Kidney (tissue), 22 donors: ENCODE measurements at regions of chr12 and their contacts with region 1.

Region 1: DNA sequence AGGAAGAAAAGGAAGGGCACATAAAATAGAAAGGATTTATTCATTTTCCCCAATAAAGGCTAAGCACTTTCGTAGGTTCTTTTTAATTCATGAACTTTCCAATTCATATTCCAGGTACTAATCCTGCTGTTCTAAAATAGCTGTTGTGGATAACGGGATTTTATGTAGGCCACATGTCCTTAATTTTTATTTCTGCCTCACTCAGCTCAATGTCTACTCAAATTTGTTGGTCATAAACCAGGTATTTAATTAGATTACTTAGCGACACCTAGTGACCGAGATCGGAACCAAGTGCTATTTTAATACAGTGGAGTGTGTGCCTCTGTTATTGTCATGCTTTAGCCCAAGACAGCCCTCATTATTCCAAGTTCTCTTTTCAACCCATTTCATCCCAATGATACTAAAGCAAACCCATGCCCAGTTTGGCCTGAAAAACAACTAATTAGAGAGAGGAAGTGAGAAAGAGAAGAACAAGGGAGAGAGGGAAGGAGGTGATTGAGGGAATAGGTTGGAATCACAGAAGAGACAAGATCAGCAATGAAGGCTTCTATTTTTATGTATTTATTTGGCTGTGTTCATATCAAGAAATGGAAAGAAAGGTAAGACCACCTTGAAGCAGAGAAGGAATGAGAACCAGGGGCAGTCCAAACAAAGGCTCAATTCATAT is 45.9 kb upstream of the IFNG-AS1 start:
- DNase-seq: peak in 3 of 5 donors; percentile 59 to 89 (median 88)
- H3K4me3 ChIP-seq: no peak overlapping the region
- H3K27ac ChIP-seq: no peak overlapping the region
- H3K4me1 ChIP-seq: no peaks in the 10 kb centered on the region
- H3K27me3 ChIP-seq: no peaks in the 10 kb centered on the region
- CTCF ChIP-seq: peak; percentile 76

Region 2: GRCh38 chr12:67364228-67364627 is 579.1 kb before region 1 on chr12:
- intact Hi-C with region 1: loop called (anchors 10 kb)
- DNase-seq: no peak
- H3K4me3 ChIP-seq: no peak overlapping the region
- H3K27ac ChIP-seq: no peak overlapping the region
- H3K4me1 ChIP-seq: no peaks in the 10 kb centered on the region
- H3K27me3 ChIP-seq: no peaks in the 10 kb centered on the region
- CTCF ChIP-seq: no peak

Region 3: GRCh38 chr12:67625004-67625403 is 318.4 kb before region 1 on chr12:
- intact Hi-C with region 1: no loop called
- DNase-seq: peak in 3 of 5 donors; percentile 26 to 88 (median 84)
- H3K4me3 ChIP-seq: peak overlapping the region in 2 of 3 donors; percentile 11 to 26
- H3K27ac ChIP-seq: peak overlapping the region; percentile 32 to 66
- H3K4me1 ChIP-seq: peaks cover 2 to 5% (median 4%) of the 10 kb centered on the region in 3 donors
- H3K27me3 ChIP-seq: no peaks in the 10 kb centered on the region
- CTCF ChIP-seq: no peak

Region 4: DNA sequence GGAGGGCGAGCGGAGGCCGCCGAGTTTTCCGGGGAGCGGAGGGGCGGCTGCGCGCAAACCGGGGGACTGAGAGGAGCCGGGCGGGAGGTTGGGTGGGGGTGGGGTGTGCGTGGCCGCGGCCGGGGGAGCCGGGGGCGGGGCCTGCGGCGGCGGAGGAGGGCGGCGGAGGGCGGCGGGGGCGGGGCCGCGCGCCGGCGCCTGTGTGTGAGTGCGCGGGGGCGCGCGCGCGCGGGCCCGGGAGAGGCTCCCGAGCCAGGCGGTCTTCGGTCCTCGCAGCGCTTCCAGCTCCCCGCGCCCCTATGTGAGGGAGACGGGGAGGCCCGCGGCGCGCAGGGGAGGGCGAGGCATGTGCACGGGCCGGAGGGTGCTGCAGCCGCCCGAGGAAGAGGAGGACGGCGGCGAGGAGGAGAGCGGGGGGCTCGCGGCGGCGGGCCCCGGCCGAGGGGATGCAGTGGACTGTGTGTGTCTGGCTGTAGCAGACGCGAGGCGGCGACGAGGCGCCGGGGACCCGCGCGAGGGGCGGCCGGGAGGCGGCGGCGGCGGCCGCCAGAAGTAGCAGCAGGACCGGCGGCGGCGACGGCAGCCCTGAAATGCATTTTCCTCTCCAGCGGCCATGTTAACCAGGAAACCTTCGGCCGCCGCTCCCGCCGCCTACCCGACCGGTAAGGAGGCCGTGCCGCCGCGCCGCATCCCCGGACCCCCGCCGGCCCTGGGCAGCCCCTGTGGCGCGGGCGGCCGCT is 294.7 kb before region 1 on chr12 and contains the start of gene DYRK2:
- intact Hi-C with region 1: loop called (anchors 10 kb)
- DNase-seq: peak in 4 of 5 donors; percentile 88 to 94 (median 92)
- H3K4me3 ChIP-seq: peak within 1 kb of the TSS; percentile 66 to 88 (median 77)
- H3K27ac ChIP-seq: peak within 1 kb of the TSS; percentile 87 to 89
- H3K4me1 ChIP-seq: peaks cover 0 to 13% (median 4%) of the 10 kb centered on the region in 3 donors
- H3K27me3 ChIP-seq: no peaks in the 10 kb centered on the region
- CTCF ChIP-seq: no peak
- total RNA-seq, gene DYRK2: 35.4 TPM

Region 5: GRCh38 chr12:68468036-68468435 is 524.7 kb after region 1 on chr12:
- intact Hi-C with region 1: no loop called
- DNase-seq: no peak
- H3K4me3 ChIP-seq: peak overlapping the region in 1 of 3 donors; percentile 29
- H3K27ac ChIP-seq: peak overlapping the region; percentile 55 to 67
- H3K4me1 ChIP-seq: no peaks in the 10 kb centered on the region
- H3K27me3 ChIP-seq: no peaks in the 10 kb centered on the region
- CTCF ChIP-seq: no peak